Activated naive CD4-positive, alpha-beta T cell treated with anti-CD3 and anti-CD28 coated beads for 36 hours (primary cell): ENCODE measurements at regions of chr20 and their contacts with region 1.

Region 1: GRCh38 chr20:1503564-1504227 is 12.5 kb upstream of the SIRPB2 start:
- DNase-seq: peak; percentile 91
- H3K4me3 Mint-ChIP-seq: no peak overlapping the region
- H3K27ac Mint-ChIP-seq: no peak overlapping the region
- H3K4me1 Mint-ChIP-seq: peaks cover 6% of the 10 kb centered on the region
- H3K27me3 Mint-ChIP-seq: peaks cover 9% of the 10 kb centered on the region

Region 2: GRCh38 chr20:1313236-1313964 is 190.3 kb before region 1 on chr20:
- CTCF ChIA-PET with region 1: interaction called, 8 read pairs
- intact Hi-C with region 1: loop called (anchors 1 kb)
- DNase-seq: peak; percentile 65
- H3K4me3 Mint-ChIP-seq: no peak overlapping the region
- H3K27ac Mint-ChIP-seq: no peak overlapping the region
- H3K4me1 Mint-ChIP-seq: peaks cover 6% of the 10 kb centered on the region
- H3K27me3 Mint-ChIP-seq: no peaks in the 10 kb centered on the region

Region 3: GRCh38 chr20:1375515-1375914 is 128.2 kb before region 1 on chr20:
- CTCF ChIA-PET with region 1: no interaction called
- intact Hi-C with region 1: no loop called
- DNase-seq: no peak
- H3K4me3 Mint-ChIP-seq: no peak overlapping the region
- H3K27ac Mint-ChIP-seq: peak overlapping the region; percentile 34
- H3K4me1 Mint-ChIP-seq: peaks cover 63% of the 10 kb centered on the region
- H3K27me3 Mint-ChIP-seq: no peaks in the 10 kb centered on the region

Region 4: DNA sequence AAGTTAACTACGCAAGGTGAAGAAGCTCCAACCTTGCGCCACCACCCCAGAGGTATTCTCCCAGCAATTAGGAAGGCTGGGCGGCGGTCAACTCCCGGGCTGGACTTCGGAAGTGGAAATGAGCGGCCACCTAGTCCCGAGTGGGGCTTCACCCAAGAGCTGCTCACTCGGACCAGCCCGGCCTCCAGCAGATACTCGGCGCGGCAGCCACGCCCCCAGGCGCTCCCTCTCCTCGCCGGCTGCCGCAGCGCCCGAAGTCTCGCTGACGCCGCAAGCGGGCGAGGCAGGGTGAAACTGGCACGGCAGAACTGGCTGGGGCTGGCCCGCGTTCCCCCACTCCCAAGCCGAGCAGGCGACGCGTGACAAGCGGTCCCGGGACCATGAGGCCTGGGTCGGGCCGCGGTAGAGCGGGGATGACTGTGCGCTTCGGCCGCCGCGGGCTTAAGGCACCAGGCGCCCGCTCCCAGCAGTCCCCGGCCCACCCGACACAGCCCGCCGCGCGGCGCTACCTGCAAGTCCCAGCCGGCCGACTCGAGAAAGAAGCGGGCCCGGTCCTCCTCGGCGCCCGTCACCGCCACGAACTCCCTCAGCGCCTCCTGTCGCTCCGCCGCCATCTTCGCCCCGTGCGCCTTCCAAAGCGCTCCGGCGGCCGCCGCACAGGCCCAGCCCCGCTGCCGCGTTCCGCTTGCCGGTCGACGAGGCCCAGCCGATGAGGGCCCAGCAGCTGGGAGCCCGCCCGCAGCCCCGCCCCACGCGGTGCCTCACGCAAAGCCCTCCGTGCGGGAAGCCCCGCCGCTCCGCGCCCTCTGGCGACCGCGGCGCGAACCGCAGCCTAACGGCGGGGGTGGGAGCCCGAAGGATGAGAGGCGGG is 37.2 kb before region 1 on chr20 and contains the start of gene NSFL1C:
- CTCF ChIA-PET with region 1: interaction called, 38 read pairs
- intact Hi-C with region 1: loop called (anchors 1 kb)
- DNase-seq: peak; percentile 97
- H3K4me3 Mint-ChIP-seq: peak within 1 kb of the TSS; percentile 80
- H3K27ac Mint-ChIP-seq: peak within 1 kb of the TSS; percentile 71
- H3K4me1 Mint-ChIP-seq: peaks cover 44% of the 10 kb centered on the region
- H3K27me3 Mint-ChIP-seq: peaks cover 6% of the 10 kb centered on the region
- total RNA-seq, gene NSFL1C: 80.4 to 84.1 TPM

Region 5: GRCh38 chr20:1491281-1491840 is 12.3 kb before region 1 on chr20 and contains the start of gene SIRPB2:
- CTCF ChIA-PET with region 1: interaction called, 11 read pairs
- intact Hi-C with region 1: no loop called
- DNase-seq: no peak
- H3K4me3 Mint-ChIP-seq: no peak within 1 kb of the TSS
- H3K27ac Mint-ChIP-seq: no peak within 1 kb of the TSS
- H3K4me1 Mint-ChIP-seq: peaks cover 10% of the 10 kb centered on the region
- H3K27me3 Mint-ChIP-seq: peaks cover 22% of the 10 kb centered on the region
- total RNA-seq, gene SIRPB2: not detected

Region 6: DNA sequence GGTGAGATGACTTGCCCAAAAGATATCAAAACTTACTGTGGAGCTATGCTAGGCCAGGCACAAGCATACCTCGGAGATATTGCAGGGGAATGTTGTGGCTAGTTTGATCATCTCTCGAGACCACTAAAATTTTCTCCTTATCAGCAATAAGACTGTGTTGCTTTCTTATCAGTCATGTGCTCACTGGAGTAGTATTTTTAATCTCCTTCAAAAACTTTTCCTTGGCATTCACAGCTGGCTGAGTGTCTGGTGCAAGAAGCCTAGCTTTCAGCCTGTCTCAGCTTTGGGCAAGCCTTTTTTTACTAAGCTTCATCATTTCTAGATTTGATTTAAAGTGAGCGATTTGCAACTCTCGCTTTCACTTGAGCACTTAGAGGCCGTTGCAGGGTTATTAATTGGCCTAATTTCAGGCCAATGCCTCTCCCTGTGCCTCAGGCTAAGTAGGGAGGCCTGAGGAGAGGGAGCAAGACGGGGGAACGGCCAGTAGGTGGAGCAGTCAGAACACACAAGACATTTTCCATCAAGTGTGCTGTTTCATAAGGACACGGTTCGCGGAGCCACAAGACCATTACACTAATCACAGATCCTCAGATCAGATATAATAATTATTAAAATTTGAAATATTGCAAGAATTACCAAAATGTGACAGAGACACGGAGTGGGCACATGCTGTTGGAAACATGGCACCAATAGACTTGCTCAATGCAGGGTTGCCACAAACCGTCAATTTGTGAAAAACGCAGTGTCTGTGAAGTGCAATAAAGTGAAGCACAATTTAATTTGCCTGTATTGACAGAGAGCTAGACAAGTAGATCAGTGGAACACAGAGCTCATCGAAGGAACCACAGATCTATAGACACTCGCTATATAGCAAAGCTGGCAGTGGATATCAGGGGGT is 260.7 kb after region 1 on chr20:
- CTCF ChIA-PET with region 1: interaction called, 12 read pairs
- intact Hi-C with region 1: no loop called
- DNase-seq: peak; percentile 82
- H3K4me3 Mint-ChIP-seq: no peak overlapping the region
- H3K27ac Mint-ChIP-seq: no peak overlapping the region
- H3K4me1 Mint-ChIP-seq: peaks cover 2% of the 10 kb centered on the region
- H3K27me3 Mint-ChIP-seq: no peaks in the 10 kb centered on the region